MCF 10A (cell line): ENCODE measurements at regions of chr22 and their contacts with region 1.

Region 1: GRCh38 chr22:50691521-50691920 is 18.9 kb downstream of the SHANK3 start:
- DNase-seq: peak; percentile 60
- H3K4me3 Mint-ChIP-seq: no peak overlapping the region
- H3K27ac Mint-ChIP-seq: no peak overlapping the region
- H3K4me1 Mint-ChIP-seq: peaks cover 6% of the 10 kb centered on the region
- H3K27me3 Mint-ChIP-seq: no peaks in the 10 kb centered on the region
- CTCF ChIP-seq: peak; percentile 67

Region 2: DNA sequence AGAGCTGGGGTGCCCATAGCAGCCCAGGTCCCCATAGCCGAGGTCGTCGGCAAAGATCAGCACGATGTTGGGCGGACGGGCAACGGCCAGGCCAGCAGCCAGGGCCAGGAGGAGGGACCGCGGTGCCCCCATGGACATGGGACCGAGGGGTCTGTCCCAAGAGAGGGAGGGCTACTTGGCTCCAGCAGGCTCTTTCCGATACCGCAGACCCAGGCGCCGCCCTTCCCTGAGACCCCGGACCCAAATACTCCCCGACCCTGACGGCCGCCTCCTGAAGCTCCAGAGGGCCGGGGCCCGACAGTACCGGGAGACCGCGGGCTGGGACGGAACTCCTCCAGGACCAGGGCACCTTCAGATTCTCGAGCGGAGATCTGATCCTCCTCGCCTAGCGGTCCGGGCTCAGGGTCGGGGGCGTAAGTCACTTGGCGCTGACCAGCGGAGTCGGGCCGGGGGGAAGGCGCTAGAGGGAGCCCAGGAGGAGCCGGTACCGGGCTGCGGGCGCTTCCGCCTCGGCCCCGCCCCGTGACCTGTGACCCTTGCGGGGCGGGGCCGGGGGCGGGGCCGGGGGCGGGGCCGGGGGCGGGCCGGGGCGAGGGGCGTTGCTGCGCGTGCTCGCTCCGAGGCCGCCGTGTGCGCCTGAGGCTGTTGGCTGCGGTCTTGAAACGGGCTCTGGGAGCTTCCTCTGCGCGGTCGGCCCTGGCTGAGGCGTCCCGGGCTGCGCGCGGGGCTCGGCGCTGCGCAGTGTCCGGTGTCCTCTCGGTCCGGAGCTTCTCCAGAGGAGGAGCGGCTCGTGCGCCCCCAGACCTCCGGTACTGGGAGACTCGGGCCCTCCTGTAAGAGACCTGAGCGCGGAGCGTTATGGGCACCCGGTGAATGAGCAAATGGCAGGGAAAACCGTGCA is 63.6 kb before region 1 on chr22 and contains the start of gene ARSA:
- CTCF ChIA-PET with region 1: interaction called, 46 read pairs
- POLR2A ChIA-PET with region 1: interaction called, 6 read pairs
- intact Hi-C with region 1: loop called (anchors 1 kb)
- DNase-seq: peak; percentile 83
- H3K4me3 Mint-ChIP-seq: peak within 1 kb of the TSS; percentile 80
- H3K27ac Mint-ChIP-seq: peak within 1 kb of the TSS; percentile 61
- H3K4me1 Mint-ChIP-seq: peaks cover 17% of the 10 kb centered on the region
- H3K27me3 Mint-ChIP-seq: no peaks in the 10 kb centered on the region
- CTCF ChIP-seq: peak; percentile 30
- total RNA-seq, gene ARSA: 21.3 and 22.0 TPM in 2 replicates

Region 3: GRCh38 chr22:50674606-50675549 is 16.6 kb before region 1 on chr22:
- CTCF ChIA-PET with region 1: interaction called, 14 read pairs
- POLR2A ChIA-PET with region 1: no interaction called
- intact Hi-C with region 1: no loop called
- DNase-seq: peak; percentile 42
- H3K4me3 Mint-ChIP-seq: peak overlapping the region; percentile 46
- H3K27ac Mint-ChIP-seq: no peak overlapping the region
- H3K4me1 Mint-ChIP-seq: peaks cover 6% of the 10 kb centered on the region
- H3K27me3 Mint-ChIP-seq: peaks cover 33% of the 10 kb centered on the region
- CTCF ChIP-seq: no peak

Region 4: DNA sequence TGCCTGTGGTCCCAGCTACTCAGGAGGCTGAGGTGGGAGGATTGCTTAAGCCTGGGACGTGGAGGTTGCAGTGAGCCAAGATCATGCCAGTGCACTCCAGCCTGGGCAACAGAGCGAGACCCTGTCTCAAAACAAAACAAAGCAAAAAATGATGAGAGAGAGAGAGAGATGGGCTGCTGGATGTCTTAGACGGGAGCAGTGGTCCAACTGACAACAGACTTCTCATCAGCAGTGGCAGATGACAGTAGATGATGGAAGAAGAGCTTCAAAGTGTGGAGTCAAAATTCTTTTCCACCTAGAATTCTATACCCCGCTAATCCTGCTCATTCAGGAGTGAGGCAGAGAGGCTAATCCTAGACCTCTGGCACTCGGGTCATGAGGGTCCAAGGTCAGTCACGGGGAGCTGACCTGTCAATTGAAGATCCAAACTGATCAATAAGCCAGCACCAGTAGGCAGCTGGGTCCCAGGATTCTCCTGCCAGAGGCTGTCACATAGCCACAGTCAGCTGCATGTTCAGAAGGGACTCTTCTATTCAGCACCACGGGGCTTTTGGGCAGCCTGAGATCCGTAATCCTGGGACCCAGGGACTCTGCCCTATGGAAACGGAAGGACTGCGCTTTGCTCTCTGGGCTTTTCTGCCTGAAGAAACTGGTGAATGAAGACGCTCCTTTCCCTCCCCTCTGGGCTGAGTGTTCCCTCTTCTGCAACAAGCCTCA is 17.6 kb after region 1 on chr22:
- CTCF ChIA-PET with region 1: no interaction called
- POLR2A ChIA-PET with region 1: no interaction called
- intact Hi-C with region 1: no loop called
- DNase-seq: no peak
- H3K4me3 Mint-ChIP-seq: no peak overlapping the region
- H3K27ac Mint-ChIP-seq: no peak overlapping the region
- H3K4me1 Mint-ChIP-seq: no peaks in the 10 kb centered on the region
- H3K27me3 Mint-ChIP-seq: no peaks in the 10 kb centered on the region
- CTCF ChIP-seq: no peak